Ascending aorta (tissue), 2 donors: ENCODE measurements at regions of chr19 and their contacts with region 1.

Region 1: GRCh38 chr19:36772311-36773222 is at the start of gene ZNF850:
- DNase-seq: peak; percentile 83 to 95
- H3K4me3 ChIP-seq: peak within 1 kb of the TSS; percentile 69 to 82
- H3K27ac ChIP-seq: peak within 1 kb of the TSS; percentile 74 to 86
- H3K4me1 ChIP-seq: peaks cover 0 to 6% of the 10 kb centered on the region in 2 donors
- H3K27me3 ChIP-seq: no peaks in the 10 kb centered on the region
- CTCF ChIP-seq: no peak
- total RNA-seq, gene ZNF850: 5.1 TPM

Region 2: DNA sequence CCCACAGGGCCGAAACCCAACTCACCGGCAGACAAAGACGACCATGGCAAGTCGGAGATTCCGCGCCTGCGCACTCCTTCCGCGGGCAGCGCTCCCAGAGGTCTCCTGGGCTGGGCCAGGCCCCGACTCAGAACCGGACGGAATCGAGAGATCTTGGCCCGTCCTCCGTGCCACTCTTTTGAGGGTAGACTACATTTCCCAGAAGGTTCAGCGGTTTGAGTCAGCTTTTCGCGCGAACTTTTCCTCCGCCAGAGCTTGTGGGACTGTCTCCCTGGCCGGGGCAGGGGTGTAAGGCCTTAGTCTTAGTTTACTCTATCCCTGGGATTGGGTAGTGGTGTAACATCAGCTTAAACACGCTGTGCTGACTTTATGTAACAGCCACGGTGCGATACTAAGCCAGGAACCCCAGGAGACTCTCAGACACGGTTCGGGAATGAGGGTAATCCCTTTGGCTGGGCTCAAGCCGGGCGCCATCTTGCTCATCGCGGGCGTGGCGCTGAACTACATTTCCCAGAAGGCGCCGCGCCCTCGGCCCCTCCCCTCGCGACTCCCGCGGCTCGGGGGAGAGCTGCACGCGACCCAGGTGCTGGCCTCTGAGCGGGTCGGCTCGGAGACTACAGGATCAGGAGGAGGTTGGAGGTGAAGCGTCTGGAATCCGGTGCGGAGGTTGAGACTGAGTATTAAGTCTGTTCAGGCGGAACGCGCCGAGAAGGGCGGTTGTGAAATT is 244.2 kb before region 1 on chr19 and contains the start of gene ZNF260:
- intact Hi-C with region 1: loop called (anchors 2 kb)
- DNase-seq: peak; percentile 86 to 98
- H3K4me3 ChIP-seq: peak within 1 kb of the TSS; percentile 73 to 92
- H3K27ac ChIP-seq: peak within 1 kb of the TSS; percentile 89 to 92
- H3K4me1 ChIP-seq: peaks cover 0 to 4% of the 10 kb centered on the region in 2 donors
- H3K27me3 ChIP-seq: no peaks in the 10 kb centered on the region
- CTCF ChIP-seq: no peak
- total RNA-seq, gene ZNF260: 2.1 TPM

Region 3: GRCh38 chr19:36687214-36688056 is 85.1 kb before region 1 on chr19 and contains the start of gene ZNF567:
- intact Hi-C with region 1: loop called (anchors 5 kb)
- DNase-seq: peak; percentile 88 to 98
- H3K4me3 ChIP-seq: peak within 1 kb of the TSS; percentile 68 to 75
- H3K27ac ChIP-seq: peak within 1 kb of the TSS; percentile 39 to 66
- H3K4me1 ChIP-seq: peaks cover 0 to 6% of the 10 kb centered on the region in 2 donors
- H3K27me3 ChIP-seq: no peaks in the 10 kb centered on the region
- CTCF ChIP-seq: no peak
- total RNA-seq, gene ZNF567: 3.7 TPM

Region 4: DNA sequence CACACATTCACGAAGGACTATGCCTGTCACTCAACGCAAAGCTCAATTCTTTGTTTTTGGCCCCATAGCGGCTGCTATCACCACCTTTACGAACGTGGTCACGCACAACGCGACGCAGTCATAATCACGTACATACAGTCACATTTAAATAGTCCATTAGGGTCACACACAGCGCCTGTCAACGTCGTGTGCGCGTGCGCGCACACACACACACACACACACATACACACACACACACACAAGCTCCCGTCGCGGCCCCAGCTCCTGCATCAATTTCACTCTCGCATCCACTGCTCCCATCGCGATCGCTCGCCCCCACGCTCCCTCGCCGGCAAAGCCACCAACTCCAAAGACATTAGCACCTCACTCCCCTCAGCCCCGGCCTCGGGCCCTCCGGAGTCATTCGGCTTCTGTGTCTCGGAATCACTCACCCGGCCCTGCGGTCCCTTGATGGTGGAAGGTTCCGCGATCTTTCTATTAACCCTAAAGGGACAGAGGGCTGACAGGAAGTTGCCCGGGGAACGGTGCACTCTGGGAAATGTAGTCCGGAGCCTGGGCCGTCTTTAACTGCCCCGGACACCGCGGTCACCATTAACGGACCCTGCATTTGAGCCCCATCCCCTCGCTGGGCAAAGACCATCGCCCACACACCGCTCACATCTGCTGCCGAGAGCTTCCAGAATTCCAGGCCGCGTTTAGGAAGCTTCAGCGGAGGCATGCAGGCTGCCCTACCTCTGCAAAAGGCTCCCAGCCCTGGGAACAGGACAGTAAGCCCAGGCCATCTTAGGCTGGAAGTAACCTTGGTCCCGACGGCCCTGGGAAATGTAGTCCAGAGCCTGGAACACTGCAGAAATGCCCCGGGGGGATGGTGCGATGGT is 65.6 kb after region 1 on chr19 and contains the start of gene ZNF790:
- intact Hi-C with region 1: loop called (anchors 2 kb)
- DNase-seq: peak; percentile 62 to 94
- H3K4me3 ChIP-seq: peak within 1 kb of the TSS; percentile 66 to 67
- H3K27ac ChIP-seq: peak within 1 kb of the TSS; percentile 72 to 75
- H3K4me1 ChIP-seq: peaks cover 0 to 7% of the 10 kb centered on the region in 2 donors
- H3K27me3 ChIP-seq: no peaks in the 10 kb centered on the region
- CTCF ChIP-seq: no peak
- total RNA-seq, gene ZNF790: 17.0 TPM

Region 5: GRCh38 chr19:36915992-36916830 is 143.6 kb after region 1 on chr19 and contains the starts of genes ZNF568 and ZNF829:
- intact Hi-C with region 1: loop called (anchors 5 kb)
- DNase-seq: peak; percentile 42 to 93
- H3K4me3 ChIP-seq: peak within 1 kb of the TSS; percentile 80 to 91
- H3K27ac ChIP-seq: peak within 1 kb of the TSS; percentile 93 to 98
- H3K4me1 ChIP-seq: peaks cover 0 to 10% of the 10 kb centered on the region in 2 donors
- H3K27me3 ChIP-seq: no peaks in the 10 kb centered on the region
- CTCF ChIP-seq: peak; percentile 57 to 73 (median 59)
- total RNA-seq, gene ZNF568: 2.4 TPM
- total RNA-seq, gene ZNF829: 1.2 TPM

Region 6: GRCh38 chr19:37095859-37096258 is 323.3 kb after region 1 on chr19:
- intact Hi-C with region 1: no loop called
- DNase-seq: no peak
- H3K4me3 ChIP-seq: no peak overlapping the region
- H3K27ac ChIP-seq: no peak overlapping the region
- H3K4me1 ChIP-seq: no peaks in the 10 kb centered on the region
- H3K27me3 ChIP-seq: no peaks in the 10 kb centered on the region
- CTCF ChIP-seq: no peak

Region 7: GRCh38 chr19:37217855-37218591 is 445.5 kb after region 1 on chr19 and contains the start of gene ZNF383:
- intact Hi-C with region 1: loop called (anchors 5 kb)
- DNase-seq: peak; percentile 47 to 91
- H3K4me3 ChIP-seq: peak within 1 kb of the TSS; percentile 60 to 73
- H3K27ac ChIP-seq: peak within 1 kb of the TSS; percentile 75 to 80
- H3K4me1 ChIP-seq: peaks cover 0 to 4% of the 10 kb centered on the region in 2 donors
- H3K27me3 ChIP-seq: no peaks in the 10 kb centered on the region
- CTCF ChIP-seq: no peak
- total RNA-seq, gene ZNF383: 6.9 TPM